ENCODE measurements at regions of chr21 and their contacts with region 1.

Region 1: DNA sequence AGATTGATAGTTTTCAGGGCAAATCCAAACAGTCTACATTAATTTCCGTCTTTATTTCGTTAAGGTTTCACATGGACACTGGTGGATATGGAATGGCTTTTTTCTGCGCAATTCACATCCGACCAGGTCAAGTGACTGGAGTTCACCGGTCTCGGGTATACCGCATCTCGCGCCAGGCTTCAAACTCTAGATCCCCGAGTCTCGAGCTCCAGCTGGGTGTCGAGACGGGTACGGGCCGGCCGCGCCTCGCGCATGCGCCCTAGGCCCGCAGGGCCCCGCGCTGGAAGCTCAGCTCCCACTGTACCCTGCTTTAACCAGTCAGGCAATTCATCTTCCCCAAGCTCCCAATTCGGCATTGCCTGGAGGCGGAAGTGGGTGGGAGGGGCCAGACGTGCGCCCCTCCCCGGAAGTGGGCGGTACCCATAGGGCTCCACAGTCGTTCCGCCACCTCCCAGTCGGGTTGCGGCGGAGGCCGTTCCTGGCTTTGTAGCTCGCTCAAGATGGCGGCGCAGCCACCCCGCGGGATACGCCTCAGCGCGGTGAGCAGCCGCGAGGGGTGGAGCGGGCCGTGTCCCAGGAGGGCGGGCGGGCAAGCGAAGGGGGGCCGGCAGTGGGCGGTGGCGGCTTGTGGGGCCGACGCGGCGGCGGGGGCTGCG is at the start of gene MORC3:
- DNase-seq: peak; percentile 99
- H3K4me3 Mint-ChIP-seq: peak within 1 kb of the TSS; percentile 90
- H3K27ac Mint-ChIP-seq: peak within 1 kb of the TSS; percentile 97
- H3K4me1 Mint-ChIP-seq: peaks cover 30% of the 10 kb centered on the region
- H3K27me3 Mint-ChIP-seq: no peaks in the 10 kb centered on the region
- total RNA-seq, gene MORC3: 27.7 to 30.0 TPM

Region 2: GRCh38 chr21:36135391-36136102 is 184.3 kb before region 1 on chr21:
- CTCF ChIA-PET with region 1: interaction called, 7 read pairs
- POLR2A ChIA-PET with region 1: interaction called, 4 read pairs
- intact Hi-C with region 1: loop called (anchors 1 kb)
- DNase-seq: peak; percentile 79
- H3K4me3 Mint-ChIP-seq: peak overlapping the region; percentile 91
- H3K27ac Mint-ChIP-seq: peak overlapping the region; percentile 78
- H3K4me1 Mint-ChIP-seq: peaks cover 13% of the 10 kb centered on the region
- H3K27me3 Mint-ChIP-seq: no peaks in the 10 kb centered on the region

Region 3: GRCh38 chr21:36175771-36176565 is 143.9 kb before region 1 on chr21:
- CTCF ChIA-PET with region 1: interaction called, 5 read pairs
- POLR2A ChIA-PET with region 1: interaction called, 7 read pairs
- intact Hi-C with region 1: loop called (anchors 2 kb)
- DNase-seq: no peak
- H3K4me3 Mint-ChIP-seq: no peak overlapping the region
- H3K27ac Mint-ChIP-seq: no peak overlapping the region
- H3K4me1 Mint-ChIP-seq: peaks cover 4% of the 10 kb centered on the region
- H3K27me3 Mint-ChIP-seq: no peaks in the 10 kb centered on the region

Region 4: DNA sequence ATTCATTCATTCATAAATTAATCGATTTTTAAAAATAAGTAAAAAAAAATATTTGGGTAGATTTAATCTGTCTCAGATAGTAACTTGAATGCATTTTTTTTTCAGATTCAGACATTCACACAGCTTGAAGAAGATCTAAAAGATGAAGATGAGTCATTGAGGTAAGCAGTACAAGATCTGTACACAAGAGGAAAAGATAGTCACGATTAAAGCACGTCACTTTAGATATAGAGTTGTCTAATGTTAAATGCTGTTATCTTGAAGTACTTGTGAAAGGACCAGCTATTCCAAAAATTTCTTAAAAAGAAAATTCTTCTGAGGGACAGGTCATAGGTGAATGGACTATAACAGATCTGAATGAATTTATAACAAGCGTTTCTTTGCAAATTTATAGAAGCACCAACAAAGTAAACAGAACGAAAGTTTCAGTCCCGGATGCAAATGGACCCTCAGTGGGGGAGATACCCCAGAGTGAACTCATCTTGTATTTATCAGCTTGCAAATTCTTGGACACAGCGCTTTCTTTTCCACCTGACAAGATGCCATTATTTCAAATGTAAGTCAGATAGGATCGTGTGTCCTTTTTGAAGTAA is 31.1 kb before region 1 on chr21:
- CTCF ChIA-PET with region 1: interaction called, 20 read pairs
- POLR2A ChIA-PET with region 1: interaction called, 22 read pairs
- intact Hi-C with region 1: loop called (anchors 1 kb)
- DNase-seq: no peak
- H3K4me3 Mint-ChIP-seq: peak overlapping the region; percentile 45
- H3K27ac Mint-ChIP-seq: peak overlapping the region; percentile 88
- H3K4me1 Mint-ChIP-seq: peaks cover 23% of the 10 kb centered on the region
- H3K27me3 Mint-ChIP-seq: no peaks in the 10 kb centered on the region

Region 5: DNA sequence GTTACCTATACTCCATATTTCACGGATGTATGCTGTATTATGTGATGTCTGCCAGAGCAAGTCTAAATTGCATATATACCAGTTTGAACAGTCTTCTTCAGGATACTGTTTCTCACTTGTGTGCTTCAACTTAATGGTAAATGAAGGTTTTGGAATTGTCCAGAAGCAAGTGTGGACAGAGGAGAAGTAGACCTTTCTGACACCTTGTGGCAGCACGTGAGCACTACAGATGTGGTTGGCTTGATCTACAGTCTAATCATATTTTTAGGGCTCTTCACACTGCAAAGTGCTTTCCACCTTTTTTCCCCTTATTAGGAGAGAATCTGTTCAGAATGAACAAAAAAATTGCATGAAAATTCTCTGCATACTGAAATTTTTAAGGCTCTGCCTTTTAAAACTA is 11.0 kb after region 1 on chr21:
- CTCF ChIA-PET with region 1: interaction called, 7 read pairs
- POLR2A ChIA-PET with region 1: interaction called, 9 read pairs
- intact Hi-C with region 1: loop called (anchors 1 kb)
- DNase-seq: peak; percentile 63
- H3K4me3 Mint-ChIP-seq: no peak overlapping the region
- H3K27ac Mint-ChIP-seq: peak overlapping the region; percentile 61
- H3K4me1 Mint-ChIP-seq: peaks cover 46% of the 10 kb centered on the region
- H3K27me3 Mint-ChIP-seq: no peaks in the 10 kb centered on the region

Region 6: DNA sequence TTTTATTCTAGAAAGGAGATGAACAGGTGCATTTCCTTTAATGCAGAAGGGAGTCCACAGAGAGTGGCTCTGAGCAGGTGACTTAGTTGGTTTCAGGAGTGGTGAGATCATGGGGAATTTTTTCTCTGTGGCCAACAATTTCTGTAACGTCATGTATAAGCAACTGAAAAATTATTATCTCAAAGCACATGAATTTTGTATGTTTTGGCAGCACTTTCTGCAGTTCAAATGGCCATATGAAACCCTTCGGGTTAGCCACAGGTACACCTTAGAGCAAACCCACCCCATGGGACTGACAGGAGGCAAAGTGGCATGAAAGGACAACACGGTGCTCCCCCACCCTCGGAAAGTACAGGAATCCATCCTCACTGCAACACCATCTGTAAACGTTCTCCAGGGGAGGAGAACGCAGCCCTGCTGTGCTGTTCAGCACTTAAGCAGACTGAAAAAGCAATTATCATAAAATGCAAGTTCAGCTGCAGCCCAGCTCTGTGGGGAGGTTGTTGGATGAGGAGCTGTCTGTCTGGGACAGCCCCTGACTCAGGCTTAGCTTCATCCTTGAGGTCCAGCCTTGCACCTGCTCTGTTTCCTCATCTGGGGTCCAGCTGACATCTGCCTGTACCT is 215.8 kb after region 1 on chr21:
- CTCF ChIA-PET with region 1: no interaction called
- POLR2A ChIA-PET with region 1: no interaction called
- intact Hi-C with region 1: no loop called
- DNase-seq: no peak
- H3K4me3 Mint-ChIP-seq: no peak overlapping the region
- H3K27ac Mint-ChIP-seq: no peak overlapping the region
- H3K4me1 Mint-ChIP-seq: no peaks in the 10 kb centered on the region
- H3K27me3 Mint-ChIP-seq: peaks cover 3% of the 10 kb centered on the region

Measured in activated CD4-positive, alpha-beta memory T cell treated with anti-CD3 and anti-CD28 coated beads for 36 hours (primary cell).